Mammary epithelial cell (primary cell): ENCODE measurements at regions of chr16 and their contacts with region 1.

Region 1: DNA sequence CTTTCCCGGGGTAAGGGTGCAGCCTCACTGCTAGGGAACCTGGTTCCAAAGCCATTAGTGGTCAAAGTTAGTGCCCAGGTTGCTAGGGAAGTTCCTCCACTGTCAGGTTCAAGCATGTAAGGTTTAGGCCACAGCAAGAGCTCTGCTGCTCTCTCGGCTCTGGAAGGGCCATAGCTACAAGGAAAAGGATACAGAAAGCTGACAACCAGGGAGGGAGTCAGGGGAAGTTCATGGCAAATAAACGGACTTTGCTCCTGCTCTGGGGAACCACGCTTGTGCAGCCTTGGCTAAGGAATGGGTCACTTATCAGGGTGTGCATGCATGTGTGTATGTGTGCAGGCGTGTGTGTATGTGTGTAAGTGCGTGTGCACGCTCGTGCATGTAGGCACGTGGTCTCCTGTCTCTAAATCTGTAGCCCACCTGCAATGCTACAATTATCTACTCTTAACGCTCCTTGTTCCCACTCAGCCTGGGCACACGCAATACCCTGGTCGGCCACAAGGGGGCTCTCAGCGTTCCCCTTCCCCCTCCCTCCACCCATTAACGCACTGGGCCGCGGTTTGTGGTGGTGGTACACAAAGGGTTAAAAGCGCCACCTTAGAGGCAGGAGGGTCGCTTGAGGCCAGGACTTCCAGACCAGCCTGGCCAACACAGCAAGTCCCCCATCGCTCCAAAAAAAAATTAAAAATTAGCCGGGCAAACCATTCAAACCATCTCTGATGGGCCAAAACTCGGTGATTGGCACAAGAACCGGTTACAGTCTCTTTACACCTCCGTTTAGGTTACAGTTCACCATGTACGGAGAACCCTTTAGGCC is 48.4 kb upstream of the KDM8 start:
- DNase-seq: peak; percentile 14
- H3K4me3 ChIP-seq: no peak overlapping the region
- H3K27ac ChIP-seq: no peak overlapping the region
- H3K4me1 ChIP-seq: no peaks in the 10 kb centered on the region
- H3K27me3 ChIP-seq: no peaks in the 10 kb centered on the region
- CTCF ChIP-seq: peak; percentile 94 to 98

Region 2: GRCh38 chr16:26930786-26931581 is 223.9 kb before region 1 on chr16:
- CTCF ChIA-PET with region 1: no interaction called
- dilution Hi-C with region 1: no loop called
- in situ Hi-C with region 1: no loop called
- intact Hi-C with region 1: no loop called
- DNase-seq: no peak
- H3K4me3 ChIP-seq: no peak overlapping the region
- H3K27ac ChIP-seq: no peak overlapping the region
- H3K4me1 ChIP-seq: no peaks in the 10 kb centered on the region
- H3K27me3 ChIP-seq: no peaks in the 10 kb centered on the region
- CTCF ChIP-seq: no peak

Region 3: DNA sequence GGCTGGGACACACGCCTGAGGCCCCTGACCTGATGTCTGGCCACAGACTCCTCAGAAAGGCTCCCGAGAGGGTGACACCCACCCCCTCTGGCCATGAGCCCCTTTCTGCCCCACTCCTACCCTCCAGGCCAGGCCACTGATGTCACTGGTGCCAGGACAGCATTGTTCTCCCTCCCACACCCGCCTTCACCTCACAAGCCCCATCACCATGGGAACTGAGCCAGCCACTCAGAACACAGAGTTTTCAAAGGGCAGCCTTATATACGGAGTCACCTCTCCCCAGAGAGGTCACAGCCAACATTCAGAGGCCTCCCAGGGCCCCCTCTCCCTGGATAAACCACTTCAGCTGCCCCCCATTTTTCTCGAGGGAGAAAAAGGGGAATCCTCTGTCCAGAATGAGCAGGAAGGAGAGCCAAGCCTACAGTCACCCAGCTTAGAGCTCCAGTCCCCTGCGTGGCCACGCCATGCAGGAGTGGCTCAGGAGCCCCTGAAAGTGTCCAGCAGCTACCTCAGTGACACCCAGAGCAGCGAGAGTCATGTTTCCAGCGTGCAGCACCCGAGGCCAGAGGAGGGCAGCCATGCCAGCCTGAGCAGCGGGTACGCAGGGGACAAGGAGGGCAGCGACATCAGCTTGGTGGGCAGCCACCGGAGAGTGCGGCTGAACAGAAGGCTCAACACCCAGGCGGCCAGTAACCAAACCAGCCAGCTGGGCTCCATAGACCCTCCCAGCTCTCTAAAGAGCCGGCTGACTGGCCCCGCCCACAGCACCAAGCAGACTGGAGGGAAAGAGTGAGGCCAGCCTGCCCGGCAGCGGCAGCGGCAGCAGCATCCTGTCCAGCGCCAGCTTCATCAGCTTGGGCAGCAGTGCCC is 88.0 kb before region 1 on chr16 and contains the start of gene C16orf82:
- CTCF ChIA-PET with region 1: no interaction called
- dilution Hi-C with region 1: no loop called
- in situ Hi-C with region 1: no loop called
- intact Hi-C with region 1: no loop called
- DNase-seq: no peak
- H3K4me3 ChIP-seq: no peak within 1 kb of the TSS
- H3K27ac ChIP-seq: no peak within 1 kb of the TSS
- H3K4me1 ChIP-seq: no peaks in the 10 kb centered on the region
- H3K27me3 ChIP-seq: no peaks in the 10 kb centered on the region
- CTCF ChIP-seq: no peak
- total RNA-seq, gene C16orf82: not detected

Region 4: DNA sequence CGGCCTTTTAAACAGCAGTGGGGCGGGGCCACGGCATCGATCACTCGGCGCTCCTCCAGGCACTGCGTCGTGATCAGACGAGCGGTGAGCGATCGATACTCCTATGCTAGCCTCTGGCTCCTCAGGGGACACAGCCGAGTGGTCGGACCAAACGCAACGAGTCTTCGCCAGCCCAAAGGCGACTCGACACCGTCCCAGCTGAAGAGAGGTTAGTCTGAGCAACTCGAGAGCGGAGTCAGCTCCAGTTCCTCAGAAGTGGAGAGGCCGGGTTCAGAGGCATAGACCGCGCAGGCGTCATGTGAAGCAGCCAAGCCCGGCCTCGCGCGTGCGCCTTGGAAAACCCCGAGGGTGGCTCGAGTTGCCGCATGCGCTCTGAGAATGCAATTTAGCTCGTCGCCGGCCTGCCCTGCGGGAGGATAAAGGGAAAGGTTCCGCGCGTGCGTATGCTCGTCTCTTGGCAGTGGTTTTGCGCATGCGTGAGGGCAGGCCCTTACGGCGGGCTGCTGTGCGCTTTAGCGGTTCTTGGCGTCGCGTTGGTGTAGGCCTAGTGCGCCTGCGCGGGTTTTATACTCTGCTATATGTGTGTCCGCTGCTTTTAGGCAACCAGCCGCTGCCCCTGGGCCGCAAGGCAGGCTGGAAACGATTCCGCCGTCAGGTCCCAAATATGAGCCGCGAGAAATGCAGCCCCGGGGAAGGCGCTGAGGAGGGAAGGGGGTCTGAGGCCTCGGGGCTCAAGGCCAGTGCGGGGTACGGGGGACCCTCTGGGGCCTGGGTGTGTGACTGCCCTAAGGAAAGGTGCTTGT is 48.7 kb after region 1 on chr16 and contains the start of gene KDM8:
- CTCF ChIA-PET with region 1: no interaction called
- dilution Hi-C with region 1: no loop called
- in situ Hi-C with region 1: no loop called
- intact Hi-C with region 1: loop called (anchors 2 kb)
- DNase-seq: peak; percentile 99
- H3K4me3 ChIP-seq: peak within 1 kb of the TSS; percentile 60 to 89 (median 87)
- H3K27ac ChIP-seq: peak within 1 kb of the TSS; percentile 88
- H3K4me1 ChIP-seq: peaks cover 16% of the 10 kb centered on the region
- H3K27me3 ChIP-seq: no peaks in the 10 kb centered on the region
- CTCF ChIP-seq: no peak
- total RNA-seq, gene KDM8: 2.8 to 4.0 TPM

Region 5: DNA sequence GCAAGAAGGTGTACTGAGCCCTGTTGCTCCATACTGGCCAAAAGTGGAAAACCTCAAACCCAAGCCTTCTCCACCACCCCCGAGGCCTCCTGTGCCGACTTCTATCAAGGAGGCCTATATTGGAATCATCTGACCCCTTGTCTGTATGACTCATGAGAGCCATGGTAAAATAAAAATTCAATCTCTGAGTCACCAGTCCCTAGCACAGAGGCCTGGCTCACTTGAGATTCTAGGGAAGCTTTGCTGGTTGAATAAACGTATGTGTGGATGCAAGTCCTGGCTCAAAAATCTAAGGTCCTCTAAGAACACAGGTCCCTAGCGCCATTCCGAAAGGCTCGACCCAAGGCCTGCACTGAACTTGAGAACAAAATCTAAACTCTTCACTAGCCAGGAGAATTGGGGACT is 98.6 kb after region 1 on chr16:
- CTCF ChIA-PET with region 1: no interaction called
- dilution Hi-C with region 1: loop called (anchors 5 kb)
- in situ Hi-C with region 1: no loop called
- intact Hi-C with region 1: no loop called
- DNase-seq: peak; percentile 85
- H3K4me3 ChIP-seq: no peak overlapping the region
- H3K27ac ChIP-seq: peak overlapping the region; percentile 31
- H3K4me1 ChIP-seq: peaks cover 37% of the 10 kb centered on the region
- H3K27me3 ChIP-seq: no peaks in the 10 kb centered on the region
- CTCF ChIP-seq: no peak

Region 6: DNA sequence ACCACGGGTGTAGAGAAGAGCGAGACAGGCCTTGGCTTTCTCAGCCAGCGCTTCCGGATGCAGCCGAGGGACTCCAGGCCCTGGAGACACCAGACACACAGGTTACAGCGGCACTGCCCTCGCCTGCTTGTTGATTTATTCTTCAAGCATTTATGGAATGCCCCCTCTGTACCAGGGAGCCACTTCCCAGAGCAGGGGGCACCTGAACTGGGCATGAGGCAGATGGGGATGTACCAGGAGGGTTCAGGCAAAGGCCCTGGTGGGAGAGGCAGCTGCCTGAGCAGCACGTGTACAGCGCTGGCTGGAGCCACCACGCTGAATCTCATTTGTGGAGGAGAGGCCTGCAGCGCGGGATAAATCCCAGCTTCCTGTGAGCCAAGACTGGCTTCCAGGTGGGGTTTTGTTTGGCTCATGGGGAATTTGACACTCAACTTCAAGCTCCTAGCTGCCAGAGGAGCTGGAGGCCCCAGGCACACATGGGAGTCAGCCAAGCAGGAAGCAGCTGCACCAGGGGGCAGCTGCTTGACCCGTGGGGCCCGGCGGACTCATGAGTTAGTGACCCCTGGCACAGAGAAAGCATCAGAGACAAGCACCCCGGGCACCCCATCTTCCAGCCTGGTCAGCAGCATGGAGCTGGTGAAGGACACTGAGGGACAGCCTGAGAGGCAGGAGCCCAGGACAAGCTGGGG is 306.7 kb after region 1 on chr16:
- CTCF ChIA-PET with region 1: no interaction called
- dilution Hi-C with region 1: no loop called
- in situ Hi-C with region 1: no loop called
- intact Hi-C with region 1: loop called (anchors 1 kb)
- DNase-seq: no peak
- H3K4me3 ChIP-seq: no peak overlapping the region
- H3K27ac ChIP-seq: no peak overlapping the region
- H3K4me1 ChIP-seq: peaks cover 12% of the 10 kb centered on the region
- H3K27me3 ChIP-seq: no peaks in the 10 kb centered on the region
- CTCF ChIP-seq: no peak